Dendritic cell treated with granulocyte-macrophage colony-stimulating factor and Interleukin-4, amounts not matched to agents 40 ng/mL and 50 ng/mL, for 4 days (primary cell): ENCODE measurements at regions of chr11 and their contacts with region 1.

Region 1: GRCh38 chr11:61332797-61333549 is at the starts of genes DDB1 and TKFC:
- H3K4me3 Mint-ChIP-seq: peak within 1 kb of the TSS; percentile 87
- H3K27ac Mint-ChIP-seq: peak within 1 kb of the TSS; percentile 83
- H3K4me1 Mint-ChIP-seq: peaks cover 46% of the 10 kb centered on the region
- H3K27me3 Mint-ChIP-seq: no peaks in the 10 kb centered on the region

Region 2: DNA sequence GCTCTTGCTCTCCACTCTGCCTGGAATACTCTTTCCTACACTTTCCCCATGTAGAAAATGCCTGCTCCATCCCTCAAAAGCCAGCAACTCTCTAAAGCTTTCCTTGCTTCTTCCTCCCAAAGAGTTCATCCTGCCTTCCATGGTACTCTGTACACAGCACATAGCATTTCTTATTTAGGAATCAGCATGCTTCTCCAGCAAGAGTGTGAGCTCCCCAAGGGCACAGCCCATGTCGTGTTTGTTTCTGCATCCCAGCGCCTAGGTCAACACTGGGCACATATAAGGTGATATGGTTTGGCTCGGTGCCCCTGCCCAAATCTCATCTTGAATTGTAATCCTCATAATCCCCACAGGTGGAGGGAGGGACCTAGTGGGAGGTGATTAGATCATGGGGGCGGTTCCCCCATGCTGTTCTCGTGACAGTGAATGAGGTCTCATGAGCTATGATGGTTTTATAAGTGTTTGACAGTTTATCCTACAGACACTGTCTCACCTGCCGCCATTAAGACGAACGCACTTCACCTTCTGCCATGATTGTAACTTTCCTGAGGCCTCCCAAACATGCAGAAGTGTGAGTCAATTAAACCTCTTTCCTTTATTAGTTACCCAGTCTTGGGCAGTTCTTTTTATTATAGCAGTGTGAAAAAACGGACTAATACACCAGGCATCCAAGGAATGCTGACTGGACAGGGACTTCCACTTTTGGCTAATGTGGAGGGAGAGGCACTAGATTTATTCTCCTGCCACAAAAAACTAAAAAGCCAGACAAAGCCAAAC is 180.0 kb before region 1 on chr11:
- intact Hi-C with region 1: no loop called
- H3K4me3 Mint-ChIP-seq: no peak overlapping the region
- H3K27ac Mint-ChIP-seq: peak overlapping the region; percentile 38
- H3K4me1 Mint-ChIP-seq: peaks cover 82% of the 10 kb centered on the region
- H3K27me3 Mint-ChIP-seq: no peaks in the 10 kb centered on the region

Region 3: DNA sequence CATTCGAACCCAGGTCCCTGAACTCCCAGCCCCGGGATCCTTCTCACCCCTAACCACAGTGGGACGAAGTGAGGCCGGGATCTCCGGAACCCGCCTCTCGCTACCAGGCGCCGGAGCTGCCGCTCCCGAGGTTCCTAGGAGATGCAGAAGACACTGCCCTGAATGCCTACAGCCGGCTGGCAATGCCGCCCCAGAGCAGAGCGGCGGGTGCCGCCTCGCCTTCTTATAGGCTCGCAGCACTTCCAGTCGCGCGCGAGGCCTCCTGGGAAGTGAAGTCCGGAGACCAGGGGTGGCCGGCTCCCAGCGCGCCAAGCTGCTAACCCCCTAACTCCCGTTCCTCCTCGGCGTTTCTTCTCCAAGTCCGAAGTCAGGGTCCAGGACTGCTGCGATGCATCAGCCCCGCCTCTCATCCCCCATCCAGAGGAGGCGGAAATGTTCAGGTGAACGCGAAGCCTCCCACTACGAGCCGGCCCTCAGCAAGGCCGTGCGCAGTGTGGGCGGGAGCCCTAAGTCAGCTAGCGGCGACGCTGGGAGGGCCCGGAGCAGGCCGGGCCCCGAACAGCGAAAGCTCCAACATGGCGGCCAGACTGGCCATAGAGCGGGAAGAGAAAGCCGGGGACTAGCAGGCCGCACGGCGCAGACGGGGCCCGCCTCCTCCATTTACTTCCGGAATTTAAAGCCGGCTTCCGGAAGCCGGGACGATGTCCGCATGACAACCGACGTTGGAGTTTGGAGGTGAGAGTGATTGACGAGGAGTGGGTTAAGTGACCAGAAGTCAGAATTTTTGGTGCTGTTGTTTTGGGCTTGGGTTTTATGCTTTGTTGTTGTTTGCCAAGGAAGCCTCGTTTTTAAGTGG is 28.9 kb after region 1 on chr11 and contains the starts of genes CYB561A3 and TMEM138:
- intact Hi-C with region 1: loop called (anchors 1 kb)
- H3K4me3 Mint-ChIP-seq: peak within 1 kb of the TSS; percentile 100
- H3K27ac Mint-ChIP-seq: peak within 1 kb of the TSS; percentile 98
- H3K4me1 Mint-ChIP-seq: peaks cover 51% of the 10 kb centered on the region
- H3K27me3 Mint-ChIP-seq: no peaks in the 10 kb centered on the region

Region 4: GRCh38 chr11:61384271-61385242 is 51.6 kb after region 1 on chr11:
- intact Hi-C with region 1: loop called (anchors 1 kb)
- H3K4me3 Mint-ChIP-seq: no peak overlapping the region
- H3K27ac Mint-ChIP-seq: no peak overlapping the region
- H3K4me1 Mint-ChIP-seq: peaks cover 30% of the 10 kb centered on the region
- H3K27me3 Mint-ChIP-seq: peaks cover 3% of the 10 kb centered on the region